ENCODE measurements at regions of chr1 and their contacts with region 1.

Region 1: DNA sequence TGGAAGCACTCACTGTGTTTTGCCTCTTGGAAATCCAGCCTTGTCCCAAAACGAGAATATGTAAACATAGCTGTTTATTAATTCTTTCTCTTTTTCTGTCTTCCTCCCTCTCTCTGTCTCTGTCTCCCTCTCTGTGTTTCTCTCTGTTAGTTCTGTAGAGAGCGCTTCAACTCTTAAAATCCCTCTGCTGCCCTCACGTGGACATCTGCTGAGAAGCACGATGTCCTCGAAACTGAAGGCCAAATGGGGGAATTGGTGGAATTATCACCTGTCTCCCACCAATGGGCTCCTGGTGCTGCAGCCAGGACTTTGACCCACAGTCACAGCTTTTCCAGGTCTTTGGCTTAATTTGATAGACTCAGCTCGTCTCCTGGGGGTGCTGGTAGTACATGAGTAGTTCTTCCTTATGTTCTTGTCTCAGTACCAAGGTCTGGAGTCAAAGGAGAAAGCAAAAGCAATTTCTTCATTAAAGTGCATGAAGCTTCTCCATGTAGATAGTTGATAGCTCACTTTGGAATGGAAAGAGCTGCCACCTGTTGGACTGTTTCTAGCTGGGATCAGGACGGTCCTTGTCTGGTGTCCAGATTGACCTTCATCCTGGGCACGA is 5.5 kb upstream of the GBP6 start:
- DNase-seq: peak; percentile 92
- ATAC-seq: peak; percentile 93

Region 2: GRCh38 chr1:89001510-89001909 is 356.9 kb before region 1 on chr1:
- intact Hi-C with region 1: loop called (anchors 5 kb)
- DNase-seq: no peak
- ATAC-seq: no peak

Region 3: GRCh38 chr1:89171067-89171438 is 187.3 kb before region 1 on chr1:
- intact Hi-C with region 1: no loop called
- DNase-seq: no peak
- ATAC-seq: no peak

Region 4: DNA sequence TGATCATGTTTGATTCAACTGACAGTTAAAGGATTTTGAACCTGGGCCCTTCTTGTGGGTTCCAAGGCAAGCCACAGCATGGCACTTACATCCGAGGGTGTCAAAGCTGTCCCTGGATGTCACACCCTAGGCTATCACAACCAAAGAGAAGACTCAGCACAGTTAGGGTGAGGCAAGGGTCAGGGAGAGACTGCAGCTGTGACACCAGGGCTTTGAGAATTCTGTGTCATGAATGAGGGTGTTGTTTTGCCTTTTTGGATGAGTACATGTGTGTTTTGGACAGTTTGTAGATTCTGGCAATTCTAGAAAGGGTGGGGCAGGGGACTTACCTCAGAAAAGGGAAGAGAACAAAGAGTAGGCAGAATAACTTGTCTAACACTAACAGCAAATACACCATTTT is 598.7 kb after region 1 on chr1:
- intact Hi-C with region 1: no loop called
- DNase-seq: no peak
- ATAC-seq: peak; percentile 93